CD4-positive, alpha-beta memory T cell (primary cell): ENCODE measurements at regions of chr17 and their contacts with region 1.

Region 1: DNA sequence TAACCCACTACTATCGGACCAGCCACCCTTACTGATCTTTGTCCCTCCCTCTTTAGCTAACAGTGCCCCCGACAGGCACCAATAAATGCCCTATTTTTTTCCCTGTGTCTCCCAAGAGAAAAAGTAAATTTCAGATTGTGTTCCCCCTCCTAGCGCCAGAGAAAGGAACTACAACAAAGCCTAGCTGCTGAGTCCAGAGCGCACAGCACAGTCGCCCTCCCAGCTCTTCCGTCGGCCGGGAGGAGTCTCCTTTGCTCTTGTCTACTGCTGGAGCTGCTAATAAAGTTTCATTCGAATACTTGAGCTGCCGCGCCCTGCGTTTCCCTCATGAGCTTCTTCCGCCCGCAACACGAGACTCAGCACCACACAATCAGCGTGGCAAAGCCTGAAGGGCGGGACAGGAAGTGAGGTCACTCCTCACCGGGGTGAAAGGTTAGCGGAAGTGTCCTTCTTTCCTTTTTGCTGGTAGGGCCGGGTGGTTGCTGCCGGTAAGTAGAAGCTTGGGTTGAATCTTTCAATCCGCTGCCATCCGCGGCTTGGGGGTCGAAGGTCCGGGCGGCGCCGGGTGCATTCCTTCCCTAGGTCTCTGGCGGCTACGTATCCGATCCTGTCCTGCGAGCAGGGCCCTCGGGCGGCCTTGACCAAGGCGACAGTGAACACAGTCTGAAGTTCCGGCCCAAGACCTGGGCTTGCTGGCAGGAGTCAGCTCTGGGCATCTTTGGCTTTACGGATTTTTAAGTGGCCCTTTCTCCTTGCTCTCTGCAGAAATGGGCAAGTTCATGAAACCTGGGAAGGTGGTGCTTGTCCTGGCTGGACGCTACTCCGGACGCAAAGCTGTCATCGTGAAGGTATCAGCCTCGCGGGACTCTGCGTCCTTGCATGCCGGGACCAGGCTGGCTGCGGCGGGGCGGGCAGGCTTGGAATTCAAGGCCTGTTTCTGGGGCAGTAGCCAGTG is at the start of gene RPL27:
- DNase-seq: peak; percentile 95 to 99 (median 99)
- H3K4me3 ChIP-seq: peak within 1 kb of the TSS; percentile 79 to 94
- H3K4me3 Mint-ChIP-seq: peak within 1 kb of the TSS; percentile 94 to 98 (median 96)
- H3K27ac ChIP-seq: peak within 1 kb of the TSS; percentile 99
- H3K27ac Mint-ChIP-seq: peak within 1 kb of the TSS; percentile 96 to 99 (median 99)
- H3K4me1 ChIP-seq: peaks cover 22% of the 10 kb centered on the region
- H3K4me1 Mint-ChIP-seq: peaks cover 16 to 36% (median 24%) of the 10 kb centered on the region in 4 donors
- H3K27me3 ChIP-seq: no peaks in the 10 kb centered on the region
- H3K27me3 Mint-ChIP-seq: peaks cover 0 to 2% of the 10 kb centered on the region in 2 donors
- total RNA-seq, gene RPL27: 1,574 to 1,622 TPM

Region 2: GRCh38 chr17:42720996-42721583 is 277.2 kb before region 1 on chr17:
- CTCF ChIA-PET with region 1: no interaction called
- POLR2A ChIA-PET with region 1: no interaction called
- intact Hi-C with region 1: loop called (anchors 10 kb)
- DNase-seq: peak in 4 of 5 donors; percentile 55 to 68 (median 62)
- H3K4me3 ChIP-seq: no peak overlapping the region
- H3K4me3 Mint-ChIP-seq: no peak overlapping the region
- H3K27ac ChIP-seq: no peak overlapping the region
- H3K27ac Mint-ChIP-seq: no peak overlapping the region
- H3K4me1 ChIP-seq: no peaks in the 10 kb centered on the region
- H3K4me1 Mint-ChIP-seq: peaks cover 3 to 14% (median 11%) of the 10 kb centered on the region in 4 donors
- H3K27me3 ChIP-seq: no peaks in the 10 kb centered on the region
- H3K27me3 Mint-ChIP-seq: no peaks in the 10 kb centered on the region

Region 3: GRCh38 chr17:42832974-42833766 is 165.1 kb before region 1 on chr17 and contains the start of gene PSME3:
- CTCF ChIA-PET with region 1: interaction called, 8 read pairs
- POLR2A ChIA-PET with region 1: interaction called, 14 read pairs
- intact Hi-C with region 1: no loop called
- DNase-seq: peak; percentile 88 to 92 (median 90)
- H3K4me3 ChIP-seq: peak within 1 kb of the TSS; percentile 72 to 97
- H3K4me3 Mint-ChIP-seq: peak within 1 kb of the TSS; percentile 93 to 97 (median 96)
- H3K27ac ChIP-seq: peak within 1 kb of the TSS; percentile 94
- H3K27ac Mint-ChIP-seq: peak within 1 kb of the TSS; percentile 99 to 100 (median 99)
- H3K4me1 ChIP-seq: peaks cover 17% of the 10 kb centered on the region
- H3K4me1 Mint-ChIP-seq: peaks cover 19 to 31% (median 25%) of the 10 kb centered on the region in 4 donors
- H3K27me3 ChIP-seq: no peaks in the 10 kb centered on the region
- H3K27me3 Mint-ChIP-seq: no peaks in the 10 kb centered on the region
- total RNA-seq, gene PSME3: 65.1 to 69.9 TPM

Region 4: DNA sequence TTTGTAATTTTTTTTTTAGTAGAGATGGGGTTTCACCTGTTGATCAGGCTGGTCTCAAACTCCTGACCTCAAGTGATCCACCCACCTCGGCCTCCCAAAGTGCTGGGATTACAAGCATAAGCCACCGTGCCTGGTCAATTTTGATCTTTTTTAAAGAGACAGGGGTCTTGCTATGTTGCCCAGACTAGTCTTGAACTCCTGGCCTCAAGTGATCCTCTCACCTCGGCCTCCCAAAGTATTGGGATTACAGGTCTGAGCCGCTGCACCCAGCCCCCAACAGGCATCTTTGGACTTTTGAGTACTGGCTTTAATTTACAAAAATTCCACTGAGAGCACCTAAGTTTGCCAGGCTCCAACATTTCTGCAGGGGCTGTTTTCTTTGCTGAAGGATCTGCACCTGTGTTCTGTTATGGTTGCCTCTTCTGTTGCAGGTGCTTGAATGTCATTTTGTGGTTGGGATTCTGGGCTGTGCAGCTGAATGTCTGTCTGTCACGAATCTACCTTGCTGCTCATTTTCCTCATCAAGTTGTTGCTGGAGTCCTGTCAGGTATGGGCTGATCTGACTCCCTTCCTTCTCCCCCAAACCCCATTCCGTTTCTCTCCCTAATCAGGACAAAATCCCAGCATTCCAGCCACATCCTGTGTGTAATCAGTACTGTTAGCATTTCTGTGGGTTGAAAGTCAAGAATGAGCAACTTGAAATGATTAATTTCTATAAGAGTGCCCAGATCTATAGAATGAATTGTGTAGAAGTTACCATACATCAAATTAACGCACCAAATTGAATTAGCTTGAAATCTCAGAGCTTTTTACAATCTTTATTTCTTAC is 89.2 kb before region 1 on chr17:
- CTCF ChIA-PET with region 1: no interaction called
- POLR2A ChIA-PET with region 1: no interaction called
- intact Hi-C with region 1: no loop called
- DNase-seq: no peak
- H3K4me3 ChIP-seq: no peak overlapping the region
- H3K4me3 Mint-ChIP-seq: no peak overlapping the region
- H3K27ac ChIP-seq: no peak overlapping the region
- H3K27ac Mint-ChIP-seq: no peak overlapping the region
- H3K4me1 ChIP-seq: no peaks in the 10 kb centered on the region
- H3K4me1 Mint-ChIP-seq: no peaks in the 10 kb centered on the region
- H3K27me3 ChIP-seq: no peaks in the 10 kb centered on the region
- H3K27me3 Mint-ChIP-seq: peaks cover 6 to 24% of the 10 kb centered on the region in 2 donors

Region 5: DNA sequence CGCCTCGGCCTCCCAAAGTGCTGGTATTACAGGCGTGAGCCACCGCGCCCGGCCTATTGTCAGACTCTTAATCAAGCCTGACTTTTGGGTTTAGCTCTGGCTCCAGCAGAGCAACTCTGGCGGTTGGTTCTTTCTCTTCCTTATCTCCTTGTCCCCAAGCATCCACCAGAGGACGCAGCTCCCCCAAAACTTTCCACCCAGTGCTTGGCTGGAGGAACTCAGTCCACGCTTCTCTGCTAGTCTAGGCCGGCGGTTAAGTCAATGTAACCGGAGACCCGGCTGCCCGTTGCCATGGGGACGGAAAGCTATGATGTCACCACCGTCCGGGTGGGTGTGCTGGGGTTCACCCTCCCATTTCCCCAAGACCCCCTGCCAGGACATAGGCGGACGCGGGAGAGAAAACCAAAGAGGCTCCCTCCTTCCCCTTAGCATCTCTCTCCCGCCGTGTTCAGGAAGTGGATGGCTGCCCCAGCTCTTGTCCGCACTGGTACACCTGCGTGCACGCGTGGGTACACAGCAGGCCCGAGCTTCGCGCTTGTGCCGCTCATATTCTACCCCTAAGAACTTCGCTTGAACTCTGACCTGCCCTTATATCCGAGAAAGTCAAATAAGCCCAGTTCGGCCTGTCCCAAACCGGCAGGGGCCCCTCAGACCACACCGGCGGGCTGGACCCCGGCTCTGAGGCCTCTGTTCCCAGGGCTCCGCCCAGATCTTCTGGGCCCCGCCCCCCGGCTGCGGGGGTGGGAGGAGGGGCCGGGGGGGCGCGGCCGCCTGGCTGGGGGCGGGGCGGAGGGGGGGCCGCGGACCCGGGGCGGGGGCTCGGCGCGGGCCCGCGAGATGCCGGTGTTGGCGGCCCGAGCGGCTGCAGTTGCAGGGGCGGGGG is 26.4 kb after region 1 on chr17 and contains the start of gene RND2:
- CTCF ChIA-PET with region 1: interaction called, 7 read pairs
- POLR2A ChIA-PET with region 1: interaction called, 33 read pairs
- intact Hi-C with region 1: loop called (anchors 1 kb)
- DNase-seq: peak; percentile 79 to 90 (median 81)
- H3K4me3 ChIP-seq: peak within 1 kb of the TSS; percentile 65 to 81
- H3K4me3 Mint-ChIP-seq: peak within 1 kb of the TSS; percentile 87 to 95 (median 91)
- H3K27ac ChIP-seq: peak within 1 kb of the TSS; percentile 69
- H3K27ac Mint-ChIP-seq: peak within 1 kb of the TSS; percentile 86 to 98 (median 96)
- H3K4me1 ChIP-seq: peaks cover 32% of the 10 kb centered on the region
- H3K4me1 Mint-ChIP-seq: peaks cover 9 to 35% (median 27%) of the 10 kb centered on the region in 4 donors
- H3K27me3 ChIP-seq: no peaks in the 10 kb centered on the region
- H3K27me3 Mint-ChIP-seq: no peaks in the 10 kb centered on the region
- total RNA-seq, gene RND2: 0.28 to 0.29 TPM

Region 6: DNA sequence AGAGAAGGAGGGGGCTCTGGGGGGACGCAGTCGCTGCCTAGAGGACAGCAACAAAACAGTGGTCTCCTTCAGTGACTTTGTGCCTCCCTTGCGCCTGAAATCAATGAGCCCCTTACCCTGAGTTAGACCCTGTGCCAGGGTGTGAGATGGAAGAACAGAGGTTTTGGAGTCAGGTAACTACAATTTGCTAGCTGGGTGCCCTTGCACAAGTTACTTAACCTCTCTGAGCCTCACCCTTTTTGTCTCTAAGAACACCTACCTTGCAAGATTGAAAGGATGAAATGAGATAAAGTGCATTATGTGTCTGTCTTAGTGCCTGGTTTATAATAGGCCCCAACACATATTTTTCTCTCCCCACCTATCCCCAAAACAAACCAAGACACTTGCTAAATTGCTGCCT is 36.6 kb after region 1 on chr17:
- CTCF ChIA-PET with region 1: no interaction called
- POLR2A ChIA-PET with region 1: no interaction called
- intact Hi-C with region 1: no loop called
- DNase-seq: no peak
- H3K4me3 ChIP-seq: no peak overlapping the region
- H3K4me3 Mint-ChIP-seq: no peak overlapping the region
- H3K27ac ChIP-seq: no peak overlapping the region
- H3K27ac Mint-ChIP-seq: peak overlapping the region in 1 of 7 donors; percentile 16
- H3K4me1 ChIP-seq: no peaks in the 10 kb centered on the region
- H3K4me1 Mint-ChIP-seq: no peaks in the 10 kb centered on the region
- H3K27me3 ChIP-seq: no peaks in the 10 kb centered on the region
- H3K27me3 Mint-ChIP-seq: no peaks in the 10 kb centered on the region

Region 7: GRCh38 chr17:43211480-43212402 is 213.5 kb after region 1 on chr17 and contains the start of gene TMEM106A:
- CTCF ChIA-PET with region 1: no interaction called
- POLR2A ChIA-PET with region 1: interaction called, 23 read pairs
- intact Hi-C with region 1: no loop called
- DNase-seq: peak; percentile 72 to 76 (median 74)
- H3K4me3 ChIP-seq: peak within 1 kb of the TSS; percentile 82 to 86
- H3K4me3 Mint-ChIP-seq: peak within 1 kb of the TSS; percentile 92 to 100 (median 99)
- H3K27ac ChIP-seq: peak within 1 kb of the TSS; percentile 87
- H3K27ac Mint-ChIP-seq: peak within 1 kb of the TSS; percentile 84 to 99 (median 98)
- H3K4me1 ChIP-seq: peaks cover 22% of the 10 kb centered on the region
- H3K4me1 Mint-ChIP-seq: peaks cover 17 to 43% (median 28%) of the 10 kb centered on the region in 4 donors
- H3K27me3 ChIP-seq: no peaks in the 10 kb centered on the region
- H3K27me3 Mint-ChIP-seq: no peaks in the 10 kb centered on the region
- total RNA-seq, gene TMEM106A: 12.5 to 12.8 TPM

Region 8: GRCh38 chr17:43367737-43368242 is 369.5 kb after region 1 on chr17:
- CTCF ChIA-PET with region 1: interaction called, 4 read pairs
- POLR2A ChIA-PET with region 1: interaction called, 69 read pairs
- intact Hi-C with region 1: no loop called
- DNase-seq: peak in 2 of 5 donors; percentile 60 to 87
- H3K4me3 ChIP-seq: peak overlapping the region; percentile 1 to 76
- H3K4me3 Mint-ChIP-seq: peak overlapping the region; percentile 91 to 98 (median 95)
- H3K27ac ChIP-seq: peak overlapping the region; percentile 91
- H3K27ac Mint-ChIP-seq: peak overlapping the region; percentile 99 to 100 (median 100)
- H3K4me1 ChIP-seq: peaks cover 22% of the 10 kb centered on the region
- H3K4me1 Mint-ChIP-seq: peaks cover 13 to 50% (median 35%) of the 10 kb centered on the region in 4 donors
- H3K27me3 ChIP-seq: no peaks in the 10 kb centered on the region
- H3K27me3 Mint-ChIP-seq: no peaks in the 10 kb centered on the region

Region 9: GRCh38 chr17:43556292-43556691 is 558.0 kb after region 1 on chr17:
- CTCF ChIA-PET with region 1: no interaction called
- POLR2A ChIA-PET with region 1: no interaction called
- intact Hi-C with region 1: no loop called
- DNase-seq: no peak
- H3K4me3 ChIP-seq: no peak overlapping the region
- H3K4me3 Mint-ChIP-seq: no peak overlapping the region
- H3K27ac ChIP-seq: no peak overlapping the region
- H3K27ac Mint-ChIP-seq: no peak overlapping the region
- H3K4me1 ChIP-seq: no peaks in the 10 kb centered on the region
- H3K4me1 Mint-ChIP-seq: peaks cover 0 to 5% (median 0%) of the 10 kb centered on the region in 4 donors
- H3K27me3 ChIP-seq: peaks cover 3% of the 10 kb centered on the region
- H3K27me3 Mint-ChIP-seq: peaks cover 14 to 20% of the 10 kb centered on the region in 2 donors